Right ventricle myocardium inferior (tissue), 1 donor: ENCODE measurements at regions of chr1 and their contacts with region 1.

Region 1: DNA sequence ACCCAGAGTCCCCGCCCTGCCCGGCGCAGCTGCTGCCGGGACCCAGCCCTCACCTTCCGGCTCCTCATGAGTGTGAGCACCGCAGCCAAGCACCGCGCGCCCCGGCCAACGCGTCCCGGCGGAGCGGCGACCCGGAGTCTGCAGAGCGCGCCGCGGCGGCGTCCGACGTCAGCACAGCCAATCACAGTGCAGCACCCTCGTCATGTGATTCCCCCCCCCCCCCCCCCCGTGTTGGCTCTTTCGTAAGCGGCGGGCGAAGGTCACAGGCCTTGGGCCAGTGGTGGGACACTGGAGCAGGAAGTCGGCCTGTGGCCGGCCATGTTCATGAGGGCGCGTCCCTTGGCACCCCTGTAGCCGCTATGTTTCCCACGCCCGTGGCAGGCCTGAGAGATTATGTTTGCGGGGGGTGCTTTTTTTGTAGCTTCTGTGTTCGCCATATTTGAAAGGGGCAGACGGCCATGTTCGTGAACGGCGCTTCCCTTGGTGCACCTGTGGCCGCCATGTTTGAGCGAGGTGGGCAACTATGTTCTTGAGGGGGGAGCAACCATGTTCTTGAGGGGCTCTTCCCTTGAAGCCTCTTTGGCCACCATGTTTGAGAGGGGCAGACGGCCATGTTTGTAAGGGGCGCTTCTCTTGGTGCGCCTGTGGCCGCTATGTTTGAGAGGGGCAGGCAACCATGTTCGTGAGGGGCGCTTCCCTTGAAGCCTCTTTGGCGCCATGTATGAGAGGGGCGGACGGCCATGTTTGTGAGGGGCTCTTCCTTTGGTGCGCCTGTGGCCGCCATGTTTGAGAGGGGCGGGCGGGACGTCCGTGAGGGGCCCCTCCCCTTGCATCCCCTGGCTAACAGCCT is at the start of gene C1orf174:
- DNase-seq: peak; percentile 97
- ATAC-seq: peak; percentile 92
- total RNA-seq, gene C1orf174: 14.1 TPM

Region 2: GRCh38 chr1:3618881-3619671 is 281.3 kb before region 1 on chr1:
- intact Hi-C with region 1: no loop called
- DNase-seq: no peak
- ATAC-seq: peak; percentile 64

Region 3: GRCh38 chr1:3809680-3810079 is 90.7 kb before region 1 on chr1:
- intact Hi-C with region 1: no loop called
- DNase-seq: no peak
- ATAC-seq: no peak

Region 4: DNA sequence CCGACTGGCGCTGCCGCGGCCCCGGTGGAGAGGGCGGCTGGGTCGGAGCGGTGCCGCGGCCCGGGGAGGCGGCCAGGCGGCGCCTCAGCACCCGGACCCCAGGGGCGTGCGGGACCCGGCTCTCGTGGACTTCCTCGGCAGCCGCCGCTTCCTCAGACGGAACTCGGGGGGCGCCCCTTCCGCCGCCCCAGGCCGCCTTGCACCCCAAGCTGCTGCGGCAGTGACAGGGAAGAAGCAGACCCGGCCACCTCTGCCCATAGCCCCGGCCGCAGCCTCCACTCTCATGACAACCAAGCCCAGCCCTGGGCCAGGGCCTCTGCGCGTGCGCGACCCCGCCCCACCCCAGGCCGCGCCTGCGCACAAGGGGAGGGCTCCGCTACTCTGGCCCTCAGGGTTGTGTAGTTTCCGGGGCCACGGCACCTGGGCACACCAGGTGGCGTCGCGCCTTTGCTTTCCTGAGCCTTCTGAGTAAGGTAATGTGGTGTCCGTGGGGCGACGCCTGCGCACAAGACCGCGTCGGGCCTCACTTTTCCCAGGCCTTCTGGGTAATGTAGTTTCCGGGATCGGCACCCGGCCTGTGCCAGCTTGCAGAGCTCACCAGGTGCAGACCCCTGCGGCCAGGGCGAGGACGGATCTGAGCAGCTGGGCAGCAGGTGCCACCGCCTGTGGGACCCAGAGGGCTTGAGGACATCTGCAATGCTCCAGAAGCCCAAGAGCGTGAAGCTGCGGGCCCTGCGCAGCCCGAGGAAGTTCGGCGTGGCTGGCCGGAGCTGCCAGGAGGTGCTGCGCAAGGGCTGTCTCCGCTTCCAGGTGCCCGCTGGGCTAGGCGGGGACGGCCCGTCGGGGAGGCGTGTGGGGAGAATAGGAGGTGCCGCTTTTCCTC is 43.2 kb before region 1 on chr1 and contains the starts of genes CEP104 and DFFB:
- intact Hi-C with region 1: loop called (anchors 5 kb)
- DNase-seq: peak; percentile 94
- ATAC-seq: peak; percentile 97
- total RNA-seq, gene CEP104: 34.1 TPM
- total RNA-seq, gene DFFB: 3.3 TPM